GM12878 (cell line): ENCODE measurements at regions of chr2 and their contacts with region 1.

Region 1: DNA sequence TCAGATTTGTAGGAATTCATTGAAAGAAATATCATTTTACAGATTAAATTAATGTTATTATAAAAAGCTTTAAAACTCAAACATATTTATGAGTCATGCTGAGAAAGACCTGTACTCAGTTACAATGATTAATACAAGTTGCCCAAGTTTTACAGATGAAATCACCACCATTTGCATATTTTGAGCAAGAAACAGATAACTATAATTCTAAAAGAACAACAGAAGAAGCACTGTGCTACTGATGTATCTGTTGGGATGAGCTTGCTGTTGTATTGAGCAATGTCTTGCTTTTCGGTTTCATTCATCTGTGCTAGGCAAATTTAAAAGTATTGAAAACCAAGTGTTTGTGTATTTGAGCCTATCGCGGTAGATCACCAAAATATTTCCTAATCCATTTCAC is 1589.1 kb upstream of the ZEB2 start:
- DNase-seq: no peak
- ATAC-seq: no peak
- H3K4me3 ChIP-seq: no peak overlapping the region
- H3K27ac ChIP-seq: no peak overlapping the region
- H3K4me1 ChIP-seq: no peaks in the 10 kb centered on the region
- H3K27me3 ChIP-seq: no peaks in the 10 kb centered on the region
- CTCF ChIP-seq: no peak
- EP300 ChIP-seq: no peak
- POLR2A ChIP-seq: no peak
- RAD21 ChIP-seq: no peak

Region 2: DNA sequence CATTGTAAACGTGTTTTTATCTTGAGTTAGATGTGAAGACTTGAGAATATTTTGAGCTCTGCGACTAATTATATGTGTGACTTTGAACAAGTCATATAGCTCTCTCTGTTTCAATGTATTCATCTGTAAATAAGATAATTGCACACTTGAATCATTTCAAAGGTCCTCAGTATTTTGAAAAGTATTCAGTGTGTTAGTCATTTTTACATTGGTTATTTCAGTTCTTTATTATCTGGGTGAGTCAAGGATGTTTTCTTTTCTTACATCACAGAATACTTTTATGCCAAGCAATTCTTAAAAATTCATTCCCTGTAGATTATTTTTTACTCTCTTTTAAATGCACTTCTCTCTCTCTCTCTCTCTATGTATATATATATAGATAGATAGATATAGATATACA is 491.1 kb before region 1 on chr2:
- CTCF ChIA-PET with region 1: no interaction called
- POLR2A ChIA-PET with region 1: no interaction called
- RAD21 ChIA-PET with region 1: no interaction called
- SMC1A ChIA-PET with region 1: no interaction called
- in situ Hi-C with region 1: no loop called
- intact Hi-C with region 1: no loop called
- DNase-seq: no peak
- ATAC-seq: no peak
- H3K4me3 ChIP-seq: no peak overlapping the region
- H3K27ac ChIP-seq: no peak overlapping the region
- H3K4me1 ChIP-seq: no peaks in the 10 kb centered on the region
- H3K27me3 ChIP-seq: no peaks in the 10 kb centered on the region; a peak in 1 of 4 replicates
- CTCF ChIP-seq: no peak
- EP300 ChIP-seq: no peak
- POLR2A ChIP-seq: no peak
- RAD21 ChIP-seq: no peak

Region 3: DNA sequence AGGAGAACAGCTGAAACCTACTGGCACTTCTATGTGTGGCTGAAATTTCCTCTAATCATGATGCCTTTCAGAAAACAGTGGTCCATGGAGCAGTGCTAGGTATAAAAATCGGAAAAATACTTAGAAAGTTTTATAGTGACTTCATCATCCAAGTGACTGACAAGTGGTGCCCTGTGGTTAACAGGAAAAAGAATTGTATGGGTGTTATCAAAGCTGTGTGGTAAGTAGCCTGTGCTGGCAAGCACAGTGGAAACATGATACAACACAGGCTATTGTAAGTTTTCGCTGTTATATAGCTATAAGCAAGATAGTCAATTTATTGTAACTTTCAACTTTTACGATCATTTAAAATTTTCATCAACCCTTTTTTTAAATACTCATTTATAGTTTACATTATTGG is 10.6 kb after region 1 on chr2:
- CTCF ChIA-PET with region 1: no interaction called
- POLR2A ChIA-PET with region 1: no interaction called
- RAD21 ChIA-PET with region 1: interaction called, 11 read pairs
- SMC1A ChIA-PET with region 1: interaction called, 14 read pairs
- in situ Hi-C with region 1: no loop called
- intact Hi-C with region 1: no loop called
- DNase-seq: no peak
- ATAC-seq: no peak
- H3K4me3 ChIP-seq: no peak overlapping the region
- H3K27ac ChIP-seq: no peak overlapping the region
- H3K4me1 ChIP-seq: no peaks in the 10 kb centered on the region
- H3K27me3 ChIP-seq: no peaks in the 10 kb centered on the region
- CTCF ChIP-seq: no peak
- EP300 ChIP-seq: no peak
- POLR2A ChIP-seq: no peak
- RAD21 ChIP-seq: no peak

Region 4: GRCh38 chr2:146131048-146131447 is 22.1 kb after region 1 on chr2:
- CTCF ChIA-PET with region 1: no interaction called
- POLR2A ChIA-PET with region 1: no interaction called
- RAD21 ChIA-PET with region 1: no interaction called
- SMC1A ChIA-PET with region 1: no interaction called
- in situ Hi-C with region 1: no loop called
- intact Hi-C with region 1: no loop called
- DNase-seq: no peak
- ATAC-seq: no peak
- H3K4me3 ChIP-seq: no peak overlapping the region
- H3K27ac ChIP-seq: no peak overlapping the region
- H3K4me1 ChIP-seq: no peaks in the 10 kb centered on the region
- H3K27me3 ChIP-seq: no peaks in the 10 kb centered on the region
- CTCF ChIP-seq: no peak
- EP300 ChIP-seq: no peak
- POLR2A ChIP-seq: no peak
- RAD21 ChIP-seq: no peak

Region 5: DNA sequence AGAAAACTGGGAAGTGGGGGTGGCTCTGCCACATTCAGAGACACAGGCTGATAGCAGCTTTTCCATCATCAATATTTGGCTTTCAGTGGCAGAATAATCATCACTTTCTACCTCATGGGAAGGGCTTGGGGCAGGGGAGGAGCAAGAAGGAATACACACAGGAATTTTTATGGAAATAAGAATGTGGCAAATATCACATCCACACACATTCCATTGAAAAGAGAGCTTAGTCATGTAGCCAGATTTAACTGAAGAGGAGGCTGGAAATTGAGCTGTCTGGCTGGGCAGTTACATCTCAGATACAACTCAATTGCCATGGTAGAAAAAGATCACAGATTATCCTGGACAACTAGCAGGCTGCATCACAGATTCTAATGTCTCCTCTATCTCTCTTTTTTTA is 261.8 kb after region 1 on chr2:
- CTCF ChIA-PET with region 1: no interaction called
- POLR2A ChIA-PET with region 1: no interaction called
- RAD21 ChIA-PET with region 1: no interaction called
- SMC1A ChIA-PET with region 1: no interaction called
- in situ Hi-C with region 1: no loop called
- intact Hi-C with region 1: no loop called
- DNase-seq: no peak
- ATAC-seq: no peak
- H3K4me3 ChIP-seq: no peak overlapping the region
- H3K27ac ChIP-seq: no peak overlapping the region
- H3K4me1 ChIP-seq: no peaks in the 10 kb centered on the region
- H3K27me3 ChIP-seq: no peaks in the 10 kb centered on the region
- CTCF ChIP-seq: no peak
- EP300 ChIP-seq: no peak
- POLR2A ChIP-seq: no peak
- RAD21 ChIP-seq: no peak